IMR-90 (cell line): ENCODE measurements at regions of chr14 and their contacts with region 1.

Region 1: DNA sequence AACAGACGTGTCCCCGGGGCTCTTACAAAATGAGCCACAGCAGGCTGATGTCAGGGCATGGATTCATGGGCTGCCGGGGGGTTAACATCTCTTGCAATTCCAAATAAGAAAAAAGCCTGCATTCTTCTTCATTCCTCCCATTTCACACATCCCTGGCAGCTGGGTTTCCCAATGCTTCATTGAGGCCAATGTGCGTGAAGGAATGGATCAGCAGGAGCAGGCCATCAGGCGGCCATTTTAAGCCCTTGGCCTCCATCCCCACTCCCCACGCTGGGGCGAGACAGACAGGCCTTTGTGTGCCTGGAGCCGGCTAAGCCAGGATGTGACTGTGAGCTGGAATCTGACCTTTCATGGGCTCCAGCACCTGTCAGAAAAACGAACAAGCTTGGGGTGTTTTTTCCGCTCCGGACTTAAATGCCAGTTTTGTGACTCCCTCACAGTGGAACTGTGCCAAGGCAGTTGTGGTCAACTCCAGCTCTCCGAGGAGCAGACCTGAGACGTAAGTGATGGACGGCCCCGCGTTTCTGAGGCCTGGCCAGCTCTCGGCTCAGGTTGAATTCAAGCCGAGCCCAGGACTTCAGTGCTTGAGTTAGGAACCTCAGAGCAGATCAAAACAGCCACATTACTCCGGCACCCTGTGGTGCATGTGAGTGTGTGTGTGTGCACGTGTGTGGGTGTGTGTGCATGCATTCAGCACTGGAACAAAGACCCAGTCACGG is 133.1 kb downstream of the TMEM30B start:
- DNase-seq: peak; percentile 100
- ATAC-seq: peak; percentile 60
- H3K4me3 ChIP-seq: no peak overlapping the region
- H3K27ac ChIP-seq: peak overlapping the region; percentile 99
- H3K4me1 ChIP-seq: peaks cover 36% of the 10 kb centered on the region
- H3K27me3 ChIP-seq: no peaks in the 10 kb centered on the region
- CTCF ChIP-seq: no peak
- POLR2A ChIP-seq: peak; percentile 22; the same call in 1 of the 2 replicates
- RAD21 ChIP-seq: no peak

Region 2: GRCh38 chr14:60622917-60623257 is 525.1 kb before region 1 on chr14:
- CTCF ChIA-PET with region 1: no interaction called
- POLR2A ChIA-PET with region 1: no interaction called
- dilution Hi-C with region 1: no loop called
- in situ Hi-C with region 1: no loop called
- intact Hi-C with region 1: loop called (anchors 2 kb)
- DNase-seq: peak; percentile 70
- ATAC-seq: no peak
- H3K4me3 ChIP-seq: no peak overlapping the region
- H3K27ac ChIP-seq: peak overlapping the region; percentile 53; the same call in 1 of the 2 replicates
- H3K4me1 ChIP-seq: peaks cover 8% of the 10 kb centered on the region
- H3K27me3 ChIP-seq: no peaks in the 10 kb centered on the region
- CTCF ChIP-seq: no peak
- POLR2A ChIP-seq: no peak
- RAD21 ChIP-seq: no peak

Region 3: DNA sequence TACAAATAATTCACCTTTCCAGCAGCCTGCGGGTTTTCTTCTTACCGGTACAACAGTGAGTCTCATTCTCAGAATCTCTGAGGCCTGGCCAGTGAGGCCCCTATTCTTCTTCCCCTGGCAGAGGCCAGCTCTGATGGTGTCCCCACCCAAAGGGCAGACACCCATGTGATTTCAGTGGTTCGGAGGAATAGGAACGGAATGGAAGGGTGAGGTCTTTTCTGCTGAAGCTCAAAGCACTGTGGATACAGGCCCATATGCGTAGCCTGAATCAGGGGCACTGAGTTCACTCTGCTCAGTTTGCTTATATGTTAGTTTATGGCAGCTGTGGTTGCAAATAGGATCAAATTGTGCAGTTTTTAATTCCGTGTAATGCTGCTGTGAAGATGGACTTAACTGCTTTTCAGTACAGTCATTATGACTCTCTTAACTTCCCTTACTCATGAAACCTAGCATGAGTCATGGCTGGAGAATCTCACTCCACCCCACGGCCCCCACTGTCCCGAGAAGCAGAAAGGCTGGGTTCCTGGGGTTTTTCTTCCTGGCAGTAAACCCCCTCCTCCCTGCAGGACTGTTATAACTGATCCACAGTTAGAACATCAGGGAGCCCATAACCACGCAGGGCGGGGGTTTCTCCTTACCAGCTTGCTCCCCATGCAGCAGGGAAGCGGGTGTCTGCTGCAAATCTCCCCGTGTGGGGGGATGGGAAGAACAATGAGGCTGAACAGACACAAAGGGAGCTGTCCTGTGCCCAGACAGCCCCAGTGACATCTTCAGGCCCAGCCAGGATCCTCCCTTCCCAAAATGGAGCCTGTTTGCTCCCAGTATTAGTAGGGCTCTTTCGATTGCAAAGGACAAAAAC is 44.3 kb before region 1 on chr14:
- CTCF ChIA-PET with region 1: interaction called, 6 read pairs
- POLR2A ChIA-PET with region 1: interaction called, 6 read pairs
- dilution Hi-C with region 1: no loop called
- in situ Hi-C with region 1: no loop called
- intact Hi-C with region 1: loop called (anchors 2 kb)
- DNase-seq: peak; percentile 99
- ATAC-seq: peak; percentile 88
- H3K4me3 ChIP-seq: no peak overlapping the region
- H3K27ac ChIP-seq: peak overlapping the region; percentile 95
- H3K4me1 ChIP-seq: peaks cover 42% of the 10 kb centered on the region
- H3K27me3 ChIP-seq: no peaks in the 10 kb centered on the region
- CTCF ChIP-seq: no peak
- POLR2A ChIP-seq: no peak
- RAD21 ChIP-seq: no peak

Region 4: GRCh38 chr14:61184112-61184511 is 36.1 kb after region 1 on chr14:
- CTCF ChIA-PET with region 1: interaction called, 4 read pairs
- POLR2A ChIA-PET with region 1: no interaction called
- dilution Hi-C with region 1: no loop called
- in situ Hi-C with region 1: no loop called
- intact Hi-C with region 1: loop called (anchors 5 kb)
- DNase-seq: peak; percentile 92
- ATAC-seq: peak; percentile 63
- H3K4me3 ChIP-seq: no peak overlapping the region
- H3K27ac ChIP-seq: peak overlapping the region; percentile 71; the same call in 1 of the 2 replicates
- H3K4me1 ChIP-seq: peaks cover 31% of the 10 kb centered on the region
- H3K27me3 ChIP-seq: no peaks in the 10 kb centered on the region
- CTCF ChIP-seq: no peak
- POLR2A ChIP-seq: no peak
- RAD21 ChIP-seq: 0 out of 2 replicates have a peak, but pooled peaks have one; percentile 12

Region 5: GRCh38 chr14:61196792-61197191 is 48.8 kb after region 1 on chr14:
- CTCF ChIA-PET with region 1: no interaction called
- POLR2A ChIA-PET with region 1: no interaction called
- dilution Hi-C with region 1: no loop called
- in situ Hi-C with region 1: no loop called
- intact Hi-C with region 1: no loop called
- DNase-seq: no peak
- ATAC-seq: no peak
- H3K4me3 ChIP-seq: no peak overlapping the region
- H3K27ac ChIP-seq: no peak overlapping the region
- H3K4me1 ChIP-seq: peaks cover 9% of the 10 kb centered on the region
- H3K27me3 ChIP-seq: no peaks in the 10 kb centered on the region
- CTCF ChIP-seq: no peak
- POLR2A ChIP-seq: no peak
- RAD21 ChIP-seq: peak; percentile 20; the same call in 1 of the 2 replicates